Activated T-helper 1 cell treated with anti-CD3 and anti-CD28 coated beads, Interleukin-12 subunit alpha, Interleukin-12 subunit beta, Interleukin-2, Interleukin-4 antibody, amounts not matched to agents 30 ng/mL and 10 ng/mL and 1 ng/mL, durations not matched to agents 14 hours and 24 hours and 36 hours (primary cell): ENCODE measurements at regions of chr1 and their contacts with region 1.

Region 1: DNA sequence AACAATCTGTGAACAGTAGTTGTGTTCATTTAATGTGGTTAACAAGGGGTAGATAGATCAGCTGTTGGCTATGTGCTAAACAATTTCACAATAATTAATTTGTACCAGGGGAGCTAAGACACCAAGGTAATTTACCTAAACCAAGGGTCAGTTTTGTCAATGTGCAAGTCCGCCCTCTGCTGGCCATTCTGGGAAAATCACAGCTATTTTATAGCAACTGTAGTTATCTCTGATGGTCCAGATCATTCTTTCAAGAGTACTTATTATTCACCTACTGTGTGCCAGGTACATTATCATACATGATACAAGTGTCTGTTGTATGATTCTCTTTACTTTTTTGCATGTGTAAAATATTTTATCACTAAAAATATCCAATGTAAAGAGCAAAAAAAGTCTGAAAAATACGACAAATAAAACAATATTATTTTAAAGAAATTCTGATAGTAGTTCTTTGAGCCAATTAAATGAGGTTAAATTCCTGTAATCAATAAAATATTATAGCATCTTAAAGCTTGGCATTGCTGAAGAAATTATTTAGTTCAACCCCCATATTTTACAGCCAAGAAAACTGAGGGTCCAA is 312.3 kb upstream of the FAM78B start:
- DNase-seq: peak; percentile 10
- H3K4me3 Mint-ChIP-seq: no peak overlapping the region
- H3K27ac Mint-ChIP-seq: no peak overlapping the region
- H3K4me1 Mint-ChIP-seq: no peaks in the 10 kb centered on the region
- H3K27me3 Mint-ChIP-seq: peaks cover 3% of the 10 kb centered on the region

Region 2: GRCh38 chr1:165717918-165718515 is 761.1 kb before region 1 on chr1:
- intact Hi-C with region 1: loop called (anchors 5 kb)
- DNase-seq: peak; percentile 16
- H3K4me3 Mint-ChIP-seq: no peak overlapping the region
- H3K27ac Mint-ChIP-seq: no peak overlapping the region
- H3K4me1 Mint-ChIP-seq: no peaks in the 10 kb centered on the region
- H3K27me3 Mint-ChIP-seq: peaks cover 6% of the 10 kb centered on the region

Region 3: DNA sequence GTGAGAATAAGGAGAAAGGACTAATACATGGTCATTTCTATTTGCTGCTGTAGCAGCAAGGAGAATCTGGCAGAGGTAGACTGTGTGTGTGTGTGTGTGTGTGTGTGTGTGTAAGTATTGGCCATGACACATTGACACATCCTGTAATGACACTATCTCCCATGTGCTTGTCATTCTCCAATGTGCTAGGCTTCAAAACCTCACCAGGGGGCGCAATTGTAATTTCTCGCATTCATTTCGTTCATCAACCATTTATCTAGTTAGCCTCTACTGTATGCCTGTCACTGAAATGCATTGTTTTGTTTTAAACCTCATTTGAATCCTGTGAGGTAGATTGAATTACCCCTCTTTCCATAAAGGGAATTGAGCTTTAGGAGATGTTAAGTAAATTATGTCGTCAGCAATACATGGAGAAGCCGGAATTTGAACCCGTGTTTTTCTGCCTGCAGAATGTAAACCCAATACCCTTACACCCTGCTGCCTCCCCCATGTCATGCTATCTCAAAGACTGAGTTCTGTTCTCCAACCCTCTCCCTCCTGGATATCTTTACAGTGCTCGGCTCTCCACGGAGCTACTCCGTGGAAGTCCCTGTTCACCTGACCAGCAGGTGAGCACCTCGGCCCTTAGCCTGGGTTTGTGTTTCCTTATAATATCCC is 550.9 kb before region 1 on chr1:
- intact Hi-C with region 1: loop called (anchors 1 kb)
- DNase-seq: peak; percentile 20
- H3K4me3 Mint-ChIP-seq: no peak overlapping the region
- H3K27ac Mint-ChIP-seq: no peak overlapping the region
- H3K4me1 Mint-ChIP-seq: peaks cover 8% of the 10 kb centered on the region
- H3K27me3 Mint-ChIP-seq: peaks cover 11% of the 10 kb centered on the region

Region 4: DNA sequence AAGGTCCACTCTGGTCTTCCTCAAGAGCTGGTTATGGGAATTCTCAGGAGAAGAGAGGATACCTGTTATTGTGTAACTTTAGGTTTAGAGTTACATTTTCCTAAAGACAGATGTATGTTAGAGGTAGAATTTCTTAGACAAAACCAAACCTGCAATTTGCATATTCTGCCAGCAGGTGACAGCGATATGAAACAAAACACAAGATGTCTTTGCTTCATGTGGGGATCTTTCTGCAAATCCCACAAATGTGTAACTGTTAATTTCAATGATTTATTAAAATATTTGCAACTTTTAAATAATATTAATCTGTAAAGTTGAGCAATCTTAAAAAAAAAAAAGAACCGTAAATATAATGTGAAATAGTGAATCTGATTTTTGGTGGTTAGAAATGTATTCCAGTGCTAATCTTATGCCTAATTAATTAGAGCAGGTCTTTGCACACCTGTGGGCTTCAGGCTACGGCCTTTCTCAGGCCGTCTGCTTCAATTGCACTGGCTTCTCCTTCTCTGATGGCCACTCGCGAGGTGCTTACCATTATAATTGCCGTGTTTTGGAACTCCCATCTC is 345.8 kb before region 1 on chr1:
- intact Hi-C with region 1: loop called (anchors 1 kb)
- DNase-seq: no peak
- H3K4me3 Mint-ChIP-seq: no peak overlapping the region
- H3K27ac Mint-ChIP-seq: no peak overlapping the region
- H3K4me1 Mint-ChIP-seq: no peaks in the 10 kb centered on the region
- H3K27me3 Mint-ChIP-seq: peaks cover 3% of the 10 kb centered on the region

Region 5: GRCh38 chr1:166322470-166322869 is 156.7 kb before region 1 on chr1:
- intact Hi-C with region 1: no loop called
- DNase-seq: no peak
- H3K4me3 Mint-ChIP-seq: no peak overlapping the region
- H3K27ac Mint-ChIP-seq: no peak overlapping the region
- H3K4me1 Mint-ChIP-seq: no peaks in the 10 kb centered on the region
- H3K27me3 Mint-ChIP-seq: no peaks in the 10 kb centered on the region